HEK293T (cell line): ENCODE measurements at regions of chr22 and their contacts with region 1.

Region 1: GRCh38 chr22:22576244-22576988 is 17.4 kb upstream of the PRAME start:
- DNase-seq: peak; percentile 87

Region 2: GRCh38 chr22:22463855-22464540 is 112.4 kb before region 1 on chr22:
- CTCF ChIA-PET with region 1: interaction called, 12 read pairs
- POLR2A ChIA-PET with region 1: no interaction called
- DNase-seq: peak; percentile 83

Region 3: DNA sequence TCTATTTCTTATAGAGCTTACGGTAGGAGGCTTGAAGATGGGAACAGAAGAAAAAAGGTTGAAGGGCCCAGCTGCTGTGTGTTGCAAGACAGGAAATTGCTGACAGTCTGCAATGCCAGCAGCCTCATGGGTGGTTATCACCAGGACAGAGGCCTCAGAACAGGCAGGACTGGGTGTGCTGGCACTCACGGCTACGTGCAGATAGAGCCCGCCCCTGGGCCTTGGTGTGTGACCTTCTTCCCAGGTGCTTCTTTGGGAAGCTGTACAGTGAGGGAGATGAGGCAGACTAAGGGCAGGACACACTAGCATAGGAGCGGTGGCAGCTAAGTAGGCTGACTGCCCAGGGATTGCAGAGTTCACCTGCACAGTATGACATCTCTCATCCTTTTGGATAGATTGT is 29.9 kb before region 1 on chr22:
- CTCF ChIA-PET with region 1: no interaction called
- POLR2A ChIA-PET with region 1: no interaction called
- DNase-seq: no peak

Region 4: GRCh38 chr22:22565981-22566380 is 10.4 kb before region 1 on chr22:
- CTCF ChIA-PET with region 1: interaction called, 12 read pairs
- POLR2A ChIA-PET with region 1: interaction called, 3 read pairs
- DNase-seq: no peak

Region 5: DNA sequence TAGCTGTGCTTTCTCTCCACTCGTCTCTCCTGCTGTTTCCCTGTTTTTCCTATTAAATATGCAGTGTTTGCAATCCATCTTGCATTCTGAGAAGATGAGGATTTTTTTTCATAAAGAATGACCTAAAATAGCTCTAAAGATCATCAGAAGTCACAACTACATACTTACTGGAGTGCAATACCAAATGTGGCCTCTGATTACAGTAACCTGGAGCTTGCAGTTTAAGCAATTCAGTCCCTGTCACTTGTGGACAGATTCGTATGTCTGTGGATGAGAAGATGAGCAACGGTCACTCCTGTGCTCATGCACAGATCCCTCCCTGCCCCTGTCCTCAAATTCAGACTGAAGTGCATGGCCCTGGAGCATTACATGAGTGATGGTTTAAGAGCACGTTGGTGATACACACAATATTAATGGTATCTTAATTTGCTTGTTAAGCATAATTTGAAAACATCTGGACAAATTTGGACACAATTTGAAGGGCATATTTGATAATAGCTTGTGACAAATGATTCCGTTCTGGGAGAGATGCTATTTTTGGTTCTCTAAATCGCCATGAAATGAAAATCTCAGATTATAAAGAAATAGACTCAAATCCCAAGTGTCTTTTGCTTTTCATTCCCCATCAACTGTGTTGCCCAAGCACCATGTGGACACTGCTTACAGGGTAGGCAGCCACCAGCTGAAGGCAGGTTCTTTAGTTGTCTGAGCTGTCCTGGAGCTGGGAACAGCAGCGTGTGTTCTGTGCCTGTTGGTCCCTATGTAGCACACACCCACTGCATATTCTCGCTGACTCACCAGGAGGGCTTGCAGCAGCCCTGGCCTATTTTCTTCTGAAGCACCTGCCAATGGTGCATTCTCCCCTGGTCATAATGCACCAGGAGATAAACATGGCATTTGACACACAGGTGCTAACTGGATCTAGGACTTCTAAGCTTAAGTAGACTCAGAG is 15.2 kb after region 1 on chr22:
- CTCF ChIA-PET with region 1: interaction called, 34 read pairs
- POLR2A ChIA-PET with region 1: no interaction called
- DNase-seq: no peak